Ovary (tissue), 10 donors: ENCODE measurements at regions of chr20 and their contacts with region 1.

Region 1: GRCh38 chr20:4613718-4614620 is 107.7 kb upstream of the PRND start:
- DNase-seq: peak in 1 of 5 donors; percentile 31
- H3K4me3 ChIP-seq: no peak overlapping the region
- H3K27ac ChIP-seq: no peak overlapping the region
- H3K4me1 ChIP-seq: no peaks in the 10 kb centered on the region
- H3K27me3 ChIP-seq: no peaks in the 10 kb centered on the region
- CTCF ChIP-seq: peak in 1 of 3 donors; percentile 30
- EP300 ChIP-seq: no peak
- POLR2A ChIP-seq: no peak

Region 2: DNA sequence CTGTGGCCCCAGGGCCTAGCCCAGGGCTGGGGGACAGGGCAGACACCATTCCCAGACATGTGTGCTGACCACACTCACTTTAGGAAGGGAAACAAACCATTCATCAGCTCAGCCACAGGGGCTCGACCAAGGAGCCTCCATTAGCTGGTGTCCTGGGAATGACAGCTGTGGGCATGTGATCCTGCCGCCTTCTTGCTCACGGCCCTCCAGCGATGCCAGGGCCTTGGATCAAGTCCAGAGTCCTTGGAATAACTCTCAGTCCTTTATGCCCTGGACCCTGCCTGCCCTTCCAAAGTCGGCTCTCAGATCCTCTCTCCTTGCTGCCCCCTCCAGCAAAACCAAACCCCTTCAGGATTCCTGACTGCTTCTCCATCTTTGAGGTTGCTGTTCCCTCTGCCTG is 433.6 kb before region 1 on chr20:
- intact Hi-C with region 1: no loop called
- DNase-seq: no peak
- H3K4me3 ChIP-seq: no peak overlapping the region
- H3K27ac ChIP-seq: no peak overlapping the region
- H3K4me1 ChIP-seq: no peaks in the 10 kb centered on the region
- H3K27me3 ChIP-seq: no peaks in the 10 kb centered on the region
- CTCF ChIP-seq: no peak
- EP300 ChIP-seq: no peak
- POLR2A ChIP-seq: no peak

Region 3: DNA sequence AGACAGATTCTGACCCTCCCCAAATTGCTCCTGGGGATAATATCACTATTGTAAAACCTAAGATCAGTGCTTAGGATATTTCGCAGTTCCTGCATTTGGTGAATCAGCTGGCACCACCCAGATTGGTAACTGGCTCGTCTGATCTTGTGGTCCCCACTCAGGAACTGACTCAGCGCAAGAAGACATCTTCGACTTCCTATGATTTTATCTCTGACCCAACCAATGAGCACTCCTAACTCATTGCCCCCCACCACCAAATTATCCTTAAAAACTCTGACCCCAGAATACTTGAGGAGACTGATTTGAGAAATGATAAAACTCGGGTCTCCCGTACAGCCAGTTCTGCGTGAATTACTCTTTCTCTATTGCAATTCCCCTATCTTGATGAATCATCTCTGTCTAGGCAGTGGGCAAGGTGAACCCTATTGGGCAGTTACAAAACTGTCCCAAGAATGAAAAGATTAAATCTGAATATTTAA is 52.1 kb after region 1 on chr20:
- intact Hi-C with region 1: loop called in 1 of 4 experiments (anchors 10 kb)
- DNase-seq: no peak
- H3K4me3 ChIP-seq: no peak overlapping the region
- H3K27ac ChIP-seq: no peak overlapping the region
- H3K4me1 ChIP-seq: no peaks in the 10 kb centered on the region
- H3K27me3 ChIP-seq: no peaks in the 10 kb centered on the region
- CTCF ChIP-seq: no peak
- EP300 ChIP-seq: no peak
- POLR2A ChIP-seq: no peak